AG04449 (cell line): ENCODE measurements at regions of chr15 and their contacts with region 1.

Region 1: GRCh38 chr15:51401872-51402517 is 60.5 kb downstream of the GLDN start:
- DNase-seq: no peak
- H3K4me3 ChIP-seq: no peak overlapping the region
- CTCF ChIP-seq: peak; percentile 68

Region 2: DNA sequence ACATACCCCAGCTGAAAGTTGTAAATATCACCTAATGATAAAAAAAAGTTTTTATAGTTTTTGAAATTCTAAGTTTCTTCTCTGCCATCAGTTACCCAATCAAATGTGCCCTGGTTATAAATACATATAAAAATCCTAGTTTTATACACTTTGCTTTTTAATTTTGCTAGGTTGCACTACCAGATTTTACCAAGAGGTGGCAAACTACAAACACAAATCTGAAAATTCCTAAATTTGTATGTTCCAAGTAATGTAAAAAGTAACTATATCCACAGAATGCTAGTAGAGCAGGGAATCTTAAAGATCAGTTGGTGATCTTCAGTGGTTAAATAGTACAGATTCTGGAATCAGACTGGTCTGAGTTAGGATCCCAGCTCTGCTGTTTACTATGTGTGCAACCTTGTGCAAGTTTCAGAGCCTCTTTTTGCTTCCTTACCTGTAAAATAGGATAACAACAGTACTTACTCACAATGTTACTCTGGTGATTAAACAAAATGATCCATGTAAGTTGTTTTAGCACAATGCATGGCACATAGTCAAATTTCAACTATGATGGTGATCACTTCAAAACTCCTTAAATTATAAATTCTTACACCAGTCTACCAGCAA is 726.4 kb before region 1 on chr15:
- CTCF ChIA-PET with region 1: no interaction called
- POLR2A ChIA-PET with region 1: no interaction called
- DNase-seq: no peak
- H3K4me3 ChIP-seq: no peak overlapping the region
- CTCF ChIP-seq: no peak

Region 3: GRCh38 chr15:51132384-51133139 is 269.4 kb before region 1 on chr15:
- CTCF ChIA-PET with region 1: interaction called, 18 read pairs
- POLR2A ChIA-PET with region 1: no interaction called
- DNase-seq: peak; percentile 95
- H3K4me3 ChIP-seq: no peak overlapping the region
- CTCF ChIP-seq: peak; percentile 94

Region 4: GRCh38 chr15:51227940-51228783 is 173.8 kb before region 1 on chr15:
- CTCF ChIA-PET with region 1: interaction called, 37 read pairs
- POLR2A ChIA-PET with region 1: no interaction called
- DNase-seq: peak; percentile 52
- H3K4me3 ChIP-seq: no peak overlapping the region
- CTCF ChIP-seq: no peak

Region 5: GRCh38 chr15:51281368-51281967 is 120.5 kb before region 1 on chr15:
- CTCF ChIA-PET with region 1: interaction called, 67 read pairs
- POLR2A ChIA-PET with region 1: no interaction called
- DNase-seq: no peak
- H3K4me3 ChIP-seq: no peak overlapping the region
- CTCF ChIP-seq: peak; percentile 87

Region 6: GRCh38 chr15:51299187-51300066 is 102.6 kb before region 1 on chr15:
- CTCF ChIA-PET with region 1: no interaction called
- POLR2A ChIA-PET with region 1: no interaction called
- DNase-seq: no peak
- H3K4me3 ChIP-seq: no peak overlapping the region
- CTCF ChIP-seq: no peak

Region 7: GRCh38 chr15:51390966-51391432 is 11.0 kb before region 1 on chr15:
- CTCF ChIA-PET with region 1: interaction called, 33 read pairs
- POLR2A ChIA-PET with region 1: no interaction called
- DNase-seq: no peak
- H3K4me3 ChIP-seq: no peak overlapping the region
- CTCF ChIP-seq: no peak

Region 8: GRCh38 chr15:51414257-51415044 is 12.5 kb after region 1 on chr15:
- CTCF ChIA-PET with region 1: interaction called, 87 read pairs
- POLR2A ChIA-PET with region 1: no interaction called
- DNase-seq: no peak
- H3K4me3 ChIP-seq: no peak overlapping the region
- CTCF ChIP-seq: no peak

Region 9: DNA sequence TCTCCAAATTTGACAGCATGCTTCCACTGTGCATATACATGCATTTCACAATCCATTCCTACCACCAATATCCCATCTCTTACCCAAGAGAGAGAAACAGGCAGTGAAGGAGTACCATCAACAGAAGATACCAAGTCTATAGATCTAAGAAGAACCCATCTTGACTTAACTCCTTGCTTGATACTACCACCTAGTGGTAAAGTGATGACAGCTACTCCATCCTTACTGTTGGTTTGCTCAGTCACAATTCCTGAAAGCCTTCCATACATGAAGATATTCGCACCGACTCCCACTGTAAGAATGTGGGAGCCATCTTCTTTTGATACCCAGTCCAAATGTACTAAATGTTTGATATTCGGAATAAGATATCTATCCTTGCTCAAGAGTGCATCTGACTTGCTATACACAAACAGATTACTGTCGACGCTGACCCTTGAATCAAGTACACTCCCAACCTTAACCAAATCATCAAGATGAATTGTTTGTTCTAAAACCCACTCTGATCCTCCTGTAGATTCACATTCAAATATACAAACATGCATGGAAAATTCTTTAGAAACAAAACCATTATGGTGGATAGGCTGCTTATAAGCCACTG is 97.5 kb after region 1 on chr15:
- CTCF ChIA-PET with region 1: interaction called, 12 read pairs
- POLR2A ChIA-PET with region 1: no interaction called
- DNase-seq: no peak
- H3K4me3 ChIP-seq: no peak overlapping the region
- CTCF ChIP-seq: peak; percentile 54